GM13977 (cell line): ENCODE measurements at regions of chr9 and their contacts with region 1.

Region 1: GRCh38 chr9:32579706-32580331 is 6.9 kb upstream of the NDUFB6 start:
- DNase-seq: peak; percentile 50
- CTCF ChIP-seq: peak; percentile 89

Region 2: GRCh38 chr9:32344551-32345182 is 235.2 kb before region 1 on chr9:
- in situ Hi-C with region 1: no loop called
- DNase-seq: no peak
- CTCF ChIP-seq: no peak

Region 3: GRCh38 chr9:32384364-32385151 is 195.3 kb before region 1 on chr9 and contains the start of gene ACO1:
- in situ Hi-C with region 1: loop called (anchors 5 kb)
- DNase-seq: peak; percentile 95
- CTCF ChIP-seq: peak; percentile 12